ENCODE measurements at regions of chr2 and their contacts with region 1.

Region 1: DNA sequence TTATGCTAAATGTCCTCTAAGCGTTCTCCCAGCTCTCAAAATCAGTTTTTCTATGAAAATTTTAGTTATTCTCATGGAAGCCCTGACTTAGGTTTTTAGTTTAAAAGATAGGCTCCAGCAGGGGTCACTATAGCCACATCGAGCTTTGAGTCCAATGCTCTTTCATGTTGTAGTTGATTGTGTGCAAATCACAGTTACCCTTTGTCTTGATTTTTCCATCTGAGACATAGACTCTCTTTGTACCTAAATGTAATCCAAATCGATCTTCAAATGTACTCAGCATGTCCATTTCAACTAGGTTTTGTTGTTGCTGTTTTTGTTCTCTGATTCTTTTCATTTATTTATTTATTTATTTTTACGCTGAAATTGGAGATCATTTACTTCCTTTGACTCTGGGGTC is 26.4 kb upstream of the MSTN start:
- DNase-seq: peak; percentile 59
- H3K4me3 Mint-ChIP-seq: no peak overlapping the region
- H3K27ac Mint-ChIP-seq: no peak overlapping the region
- H3K4me1 Mint-ChIP-seq: peaks cover 9% of the 10 kb centered on the region
- H3K27me3 Mint-ChIP-seq: no peaks in the 10 kb centered on the region
- CTCF ChIP-seq: peak; percentile 82

Region 2: DNA sequence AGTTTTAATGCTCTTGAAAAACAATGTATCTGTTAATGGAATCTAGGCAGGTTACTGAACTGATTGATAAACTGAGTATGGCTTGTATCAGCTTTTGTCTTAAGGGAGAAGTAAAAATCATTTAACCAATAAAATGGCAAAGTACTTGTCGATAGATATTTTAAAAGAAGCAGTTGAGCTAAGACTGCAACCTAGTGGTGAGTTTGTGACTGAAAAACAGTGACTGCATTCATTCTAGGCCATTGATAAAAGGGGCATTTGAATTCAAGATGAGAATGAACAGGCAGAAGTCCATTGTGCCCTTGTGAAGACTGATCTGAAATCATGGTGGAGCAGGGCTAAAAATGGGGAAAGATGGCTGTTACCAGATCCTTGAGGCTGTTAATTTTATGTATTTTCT is 33.1 kb after region 1 on chr2:
- CTCF ChIA-PET with region 1: no interaction called
- intact Hi-C with region 1: loop called (anchors 5 kb)
- DNase-seq: no peak
- H3K4me3 Mint-ChIP-seq: no peak overlapping the region
- H3K27ac Mint-ChIP-seq: no peak overlapping the region
- H3K4me1 Mint-ChIP-seq: no peaks in the 10 kb centered on the region
- H3K27me3 Mint-ChIP-seq: no peaks in the 10 kb centered on the region
- CTCF ChIP-seq: no peak

Region 3: GRCh38 chr2:190180313-190181122 is 91.6 kb after region 1 on chr2:
- CTCF ChIA-PET with region 1: interaction called, 8 read pairs
- intact Hi-C with region 1: loop called (anchors 1 kb)
- DNase-seq: peak; percentile 79
- H3K4me3 Mint-ChIP-seq: peak overlapping the region; percentile 68
- H3K27ac Mint-ChIP-seq: peak overlapping the region; percentile 68
- H3K4me1 Mint-ChIP-seq: peaks cover 15% of the 10 kb centered on the region
- H3K27me3 Mint-ChIP-seq: no peaks in the 10 kb centered on the region
- CTCF ChIP-seq: peak; percentile 82

Region 4: GRCh38 chr2:190313880-190314279 is 225.0 kb after region 1 on chr2:
- CTCF ChIA-PET with region 1: no interaction called
- intact Hi-C with region 1: loop called (anchors 1 kb)
- DNase-seq: no peak
- H3K4me3 Mint-ChIP-seq: no peak overlapping the region
- H3K27ac Mint-ChIP-seq: no peak overlapping the region
- H3K4me1 Mint-ChIP-seq: peaks cover 47% of the 10 kb centered on the region
- H3K27me3 Mint-ChIP-seq: no peaks in the 10 kb centered on the region
- CTCF ChIP-seq: no peak

Region 5: DNA sequence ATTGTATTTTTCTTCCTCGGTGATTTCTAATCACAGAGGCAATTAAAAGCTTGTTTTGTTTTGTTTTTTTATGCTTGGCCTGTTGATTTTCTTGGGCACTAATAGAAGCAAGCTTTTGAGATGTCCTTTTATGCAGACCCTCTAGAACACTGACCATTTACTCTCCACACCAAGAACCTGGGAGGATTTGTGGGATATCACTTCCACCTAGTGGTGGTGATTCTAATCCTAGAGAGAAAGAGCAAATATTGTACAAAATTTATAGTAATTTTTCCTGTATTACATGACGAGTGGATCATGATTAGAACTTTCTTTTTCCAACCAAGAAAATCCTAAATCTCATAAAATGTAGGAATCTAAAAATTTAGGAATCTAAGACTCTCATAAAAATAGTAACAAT is 422.2 kb after region 1 on chr2:
- CTCF ChIA-PET with region 1: no interaction called
- intact Hi-C with region 1: loop called (anchors 10 kb)
- DNase-seq: peak; percentile 32
- H3K4me3 Mint-ChIP-seq: no peak overlapping the region
- H3K27ac Mint-ChIP-seq: no peak overlapping the region
- H3K4me1 Mint-ChIP-seq: peaks cover 12% of the 10 kb centered on the region
- H3K27me3 Mint-ChIP-seq: no peaks in the 10 kb centered on the region
- CTCF ChIP-seq: peak; percentile 37

Measured in Calu3 (cell line).